ENCODE measurements at regions of chr1 and their contacts with region 1.

Region 1: GRCh38 chr1:9101510-9102146 is 27.3 kb downstream of the GPR157 start:
- DNase-seq: no peak
- H3K4me3 ChIP-seq: no peak overlapping the region
- CTCF ChIP-seq: no peak
- POLR2A ChIP-seq: no peak

Region 2: DNA sequence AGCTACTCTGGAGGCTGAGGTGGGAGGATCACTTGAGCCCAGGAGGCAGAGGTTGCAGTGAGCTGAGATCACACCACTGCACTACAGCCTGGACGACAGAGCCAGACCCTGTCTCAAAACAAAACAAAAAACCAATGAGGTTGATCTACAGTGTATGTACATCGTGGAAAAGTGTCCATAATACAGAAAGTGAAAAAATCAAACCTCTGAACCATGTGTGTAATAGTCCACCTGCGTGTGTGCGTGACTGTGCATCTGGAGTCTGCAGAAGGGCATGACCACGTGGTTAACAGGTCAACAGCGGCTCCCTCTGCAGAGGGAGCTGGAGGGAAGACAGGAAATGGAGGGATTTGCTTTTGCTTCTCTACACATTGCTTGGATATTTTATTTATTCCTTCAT is 190.7 kb before region 1 on chr1:
- intact Hi-C with region 1: loop called (anchors 10 kb)
- DNase-seq: no peak
- H3K4me3 ChIP-seq: no peak overlapping the region
- CTCF ChIP-seq: no peak
- POLR2A ChIP-seq: no peak

Region 3: GRCh38 chr1:9004700-9005394 is 96.8 kb before region 1 on chr1:
- intact Hi-C with region 1: loop called (anchors 10 kb)
- DNase-seq: peak; percentile 52 to 94
- H3K4me3 ChIP-seq: no peak overlapping the region
- CTCF ChIP-seq: peak in 1 of 3 donors; percentile 33
- POLR2A ChIP-seq: no peak

Measured in lower leg skin (tissue), 4 donors.